ENCODE measurements at regions of chr20 and their contacts with region 1.

Region 1: GRCh38 chr20:58309575-58310290 is at the start of gene RAB22A:
- DNase-seq: peak; percentile 93
- ATAC-seq: peak; percentile 28
- H3K4me3 Mint-ChIP-seq: peak within 1 kb of the TSS; percentile 89
- H3K27ac Mint-ChIP-seq: peak within 1 kb of the TSS; percentile 90
- H3K4me1 Mint-ChIP-seq: peaks cover 70% of the 10 kb centered on the region
- H3K27me3 Mint-ChIP-seq: no peaks in the 10 kb centered on the region
- total RNA-seq, gene RAB22A: 9.3 TPM

Region 2: GRCh38 chr20:57622579-57623377 is 687.0 kb before region 1 on chr20:
- CTCF ChIA-PET with region 1: no interaction called
- POLR2A ChIA-PET with region 1: interaction called, 6 read pairs
- intact Hi-C with region 1: loop called in 1 of 2 experiments (anchors 1 kb)
- DNase-seq: peak; percentile 86
- ATAC-seq: peak; percentile 10
- H3K4me3 Mint-ChIP-seq: peak overlapping the region; percentile 36
- H3K27ac Mint-ChIP-seq: peak overlapping the region; percentile 19
- H3K4me1 Mint-ChIP-seq: peaks cover 64% of the 10 kb centered on the region
- H3K27me3 Mint-ChIP-seq: no peaks in the 10 kb centered on the region

Region 3: GRCh38 chr20:57709931-57710799 is 599.6 kb before region 1 on chr20 and contains the start of gene PMEPA1:
- CTCF ChIA-PET with region 1: no interaction called
- POLR2A ChIA-PET with region 1: no interaction called
- intact Hi-C with region 1: loop called in 1 of 2 experiments (anchors 2 kb)
- DNase-seq: peak; percentile 95
- ATAC-seq: peak; percentile 91
- H3K4me3 Mint-ChIP-seq: peak within 1 kb of the TSS; percentile 79
- H3K27ac Mint-ChIP-seq: peak within 1 kb of the TSS; percentile 77
- H3K4me1 Mint-ChIP-seq: peaks cover 20% of the 10 kb centered on the region
- H3K27me3 Mint-ChIP-seq: peaks cover 6% of the 10 kb centered on the region
- total RNA-seq, gene PMEPA1: 1.6 to 1.8 TPM

Region 4: DNA sequence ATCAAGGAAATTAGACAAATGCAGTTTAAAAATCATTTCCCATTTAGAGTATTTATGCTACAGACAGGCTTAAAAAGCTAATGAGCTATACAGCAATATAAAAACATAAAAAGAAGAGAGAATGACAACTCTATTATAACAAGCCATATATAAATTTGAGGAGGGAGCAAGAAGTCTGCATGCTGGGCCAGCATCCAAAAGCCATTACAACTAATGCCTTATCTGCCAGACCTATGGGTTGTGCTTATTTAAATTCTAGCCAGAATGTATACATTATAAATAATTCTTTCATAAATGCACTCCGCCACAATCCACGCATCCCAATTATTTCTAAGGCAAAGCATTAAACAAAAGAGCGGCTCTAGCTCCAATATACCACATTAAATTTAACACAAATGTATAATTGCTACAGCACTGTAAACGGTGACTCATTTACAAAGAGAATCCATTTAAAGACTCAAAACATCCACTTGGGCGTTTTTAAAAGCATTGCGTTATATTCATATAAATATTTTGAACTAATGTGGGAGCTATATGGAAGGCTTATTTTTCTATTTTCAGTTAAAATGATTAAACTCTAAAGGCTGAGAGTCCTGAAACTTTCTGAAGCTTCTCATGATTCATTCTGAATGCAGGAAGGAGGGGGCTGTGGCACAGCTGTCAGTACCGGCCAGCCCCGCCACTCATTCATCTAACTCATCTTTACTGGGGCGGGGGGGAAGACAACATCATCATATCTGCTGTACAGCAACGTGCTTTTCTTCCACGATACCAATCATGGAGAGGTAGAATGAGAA is 37.9 kb before region 1 on chr20:
- CTCF ChIA-PET with region 1: interaction called, 3 read pairs
- POLR2A ChIA-PET with region 1: no interaction called
- intact Hi-C with region 1: loop called (anchors 1 kb)
- DNase-seq: peak; percentile 85
- ATAC-seq: peak; percentile 98
- H3K4me3 Mint-ChIP-seq: no peak overlapping the region
- H3K27ac Mint-ChIP-seq: peak overlapping the region; percentile 6
- H3K4me1 Mint-ChIP-seq: peaks cover 39% of the 10 kb centered on the region
- H3K27me3 Mint-ChIP-seq: no peaks in the 10 kb centered on the region

Region 5: GRCh38 chr20:58407966-58408557 is 98.3 kb after region 1 on chr20:
- CTCF ChIA-PET with region 1: no interaction called
- POLR2A ChIA-PET with region 1: no interaction called
- intact Hi-C with region 1: loop called (anchors 5 kb)
- DNase-seq: peak; percentile 54
- ATAC-seq: peak; percentile 90
- H3K4me3 Mint-ChIP-seq: peak overlapping the region; percentile 36
- H3K27ac Mint-ChIP-seq: peak overlapping the region; percentile 87
- H3K4me1 Mint-ChIP-seq: peaks cover 32% of the 10 kb centered on the region
- H3K27me3 Mint-ChIP-seq: no peaks in the 10 kb centered on the region

Region 6: GRCh38 chr20:58598211-58599014 is 288.7 kb after region 1 on chr20:
- CTCF ChIA-PET with region 1: no interaction called
- POLR2A ChIA-PET with region 1: no interaction called
- intact Hi-C with region 1: no loop called
- DNase-seq: peak; percentile 9
- ATAC-seq: no peak
- H3K4me3 Mint-ChIP-seq: no peak overlapping the region
- H3K27ac Mint-ChIP-seq: no peak overlapping the region
- H3K4me1 Mint-ChIP-seq: no peaks in the 10 kb centered on the region
- H3K27me3 Mint-ChIP-seq: peaks cover 3% of the 10 kb centered on the region

Region 7: DNA sequence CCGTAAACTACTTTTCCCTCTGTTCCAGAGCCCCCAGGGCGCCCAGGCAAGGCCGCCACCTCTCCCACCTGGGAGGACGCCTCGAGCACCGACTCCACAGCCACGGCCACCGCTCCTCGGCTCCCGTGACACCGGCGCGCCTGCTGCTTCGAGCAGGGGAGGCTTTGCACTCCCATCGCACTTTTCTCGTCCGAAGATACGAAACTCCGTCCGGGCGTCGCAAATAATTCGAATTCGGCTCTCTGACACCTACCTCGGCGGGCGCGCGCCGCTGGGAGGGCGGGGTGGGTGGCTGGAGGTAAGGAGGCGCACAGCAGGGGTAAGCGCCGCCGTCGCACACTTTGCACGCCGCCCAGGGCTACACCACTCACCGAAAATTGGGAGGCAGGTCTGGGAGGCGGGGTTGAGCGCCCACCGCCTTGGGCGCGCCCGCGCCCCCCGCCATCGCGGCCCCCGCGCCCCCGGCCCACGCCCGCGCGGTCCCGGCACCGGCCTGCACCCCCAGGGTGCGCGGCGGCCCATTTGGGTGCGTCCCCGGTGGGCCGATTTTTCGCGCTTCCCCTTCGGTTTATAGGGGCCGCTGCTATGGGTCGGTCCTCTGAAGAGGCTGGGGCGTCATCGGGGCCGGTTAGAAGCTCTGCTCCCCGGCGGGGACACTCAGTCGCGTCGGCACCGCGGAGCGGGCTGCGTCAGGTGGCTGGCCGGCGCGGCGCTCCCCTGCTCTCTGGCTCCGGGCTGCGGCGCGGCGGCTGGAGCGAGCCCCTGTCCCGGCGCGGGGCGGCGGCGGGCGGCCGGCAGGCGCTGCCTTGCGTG is 579.0 kb after region 1 on chr20:
- CTCF ChIA-PET with region 1: no interaction called
- POLR2A ChIA-PET with region 1: no interaction called
- intact Hi-C with region 1: loop called in 1 of 2 experiments (anchors 2 kb)
- DNase-seq: peak; percentile 91
- ATAC-seq: peak; percentile 58
- H3K4me3 Mint-ChIP-seq: peak overlapping the region; percentile 88
- H3K27ac Mint-ChIP-seq: peak overlapping the region; percentile 47
- H3K4me1 Mint-ChIP-seq: peaks cover 29% of the 10 kb centered on the region
- H3K27me3 Mint-ChIP-seq: no peaks in the 10 kb centered on the region

Region 8: GRCh38 chr20:59159493-59160376 is 850.0 kb after region 1 on chr20:
- CTCF ChIA-PET with region 1: no interaction called
- POLR2A ChIA-PET with region 1: no interaction called
- intact Hi-C with region 1: loop called in 1 of 2 experiments (anchors 10 kb)
- DNase-seq: peak; percentile 75
- ATAC-seq: peak; percentile 83
- H3K4me3 Mint-ChIP-seq: peak overlapping the region; percentile 80
- H3K27ac Mint-ChIP-seq: peak overlapping the region; percentile 97
- H3K4me1 Mint-ChIP-seq: peaks cover 82% of the 10 kb centered on the region
- H3K27me3 Mint-ChIP-seq: no peaks in the 10 kb centered on the region

Measured in activated CD4-positive, alpha-beta T cell treated with anti-CD3 and anti-CD28 coated beads for 36 hours (primary cell).